Activated T-helper 2 cell treated with anti-CD3 and anti-CD28 coated beads, Interferon-gamma antibody, Interleukin-2, Interleukin-4, amounts not matched to agents 10 μg/mL and 5 μg/mL and 100 μg/mL, durations not matched to agents 14 hours and 24 hours and 36 hours (primary cell): ENCODE measurements at regions of chr15 and their contacts with region 1.

Region 1: GRCh38 chr15:100349696-100350433 is 8.1 kb upstream of the ADAMTS17 start:
- DNase-seq: peak; percentile 83
- H3K4me3 Mint-ChIP-seq: peak overlapping the region; percentile 86
- H3K27ac Mint-ChIP-seq: peak overlapping the region; percentile 47
- H3K4me1 Mint-ChIP-seq: peaks cover 4% of the 10 kb centered on the region
- H3K27me3 Mint-ChIP-seq: peaks cover 21% of the 10 kb centered on the region

Region 2: GRCh38 chr15:100111103-100112060 is 238.5 kb before region 1 on chr15:
- intact Hi-C with region 1: loop called (anchors 10 kb)
- DNase-seq: no peak
- H3K4me3 Mint-ChIP-seq: peak overlapping the region; percentile 37
- H3K27ac Mint-ChIP-seq: peak overlapping the region; percentile 94
- H3K4me1 Mint-ChIP-seq: peaks cover 28% of the 10 kb centered on the region
- H3K27me3 Mint-ChIP-seq: no peaks in the 10 kb centered on the region

Region 3: DNA sequence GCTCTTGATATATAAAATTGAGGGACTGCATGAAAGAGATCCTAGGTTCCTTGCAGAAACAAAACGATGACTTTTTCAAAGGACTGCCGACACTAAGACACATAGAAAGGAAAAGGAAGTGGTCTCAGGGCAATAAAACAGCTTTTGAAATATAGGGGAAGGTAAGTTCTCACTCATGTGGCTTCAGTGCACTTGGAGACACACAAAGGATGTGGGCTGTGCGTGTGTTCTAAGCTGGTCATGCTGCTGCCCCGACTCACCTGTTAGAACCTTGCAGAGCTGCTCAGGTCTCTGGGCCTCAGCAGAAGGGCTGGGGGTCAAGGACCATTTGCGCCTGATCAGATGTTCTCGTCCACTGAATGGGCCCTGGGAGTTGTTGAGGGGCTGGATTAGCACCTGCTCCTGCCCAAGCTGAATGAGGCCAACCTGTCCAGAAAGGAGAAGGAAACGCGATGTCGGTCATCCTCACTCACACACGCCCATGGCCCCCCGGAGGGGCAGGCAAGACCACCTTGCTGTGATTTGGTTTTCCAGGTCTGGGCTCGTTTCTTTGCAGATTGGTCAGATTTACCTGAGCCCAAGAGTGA is 19.1 kb before region 1 on chr15:
- intact Hi-C with region 1: no loop called
- DNase-seq: peak; percentile 18
- H3K4me3 Mint-ChIP-seq: peak overlapping the region; percentile 7
- H3K27ac Mint-ChIP-seq: peak overlapping the region; percentile 15
- H3K4me1 Mint-ChIP-seq: peaks cover 26% of the 10 kb centered on the region
- H3K27me3 Mint-ChIP-seq: peaks cover 6% of the 10 kb centered on the region

Region 4: GRCh38 chr15:100572362-100572983 is 222.6 kb after region 1 on chr15:
- intact Hi-C with region 1: loop called (anchors 5 kb)
- DNase-seq: no peak
- H3K4me3 Mint-ChIP-seq: no peak overlapping the region
- H3K27ac Mint-ChIP-seq: no peak overlapping the region
- H3K4me1 Mint-ChIP-seq: peaks cover 33% of the 10 kb centered on the region
- H3K27me3 Mint-ChIP-seq: no peaks in the 10 kb centered on the region